Calu3 (cell line): ENCODE measurements at regions of chr1 and their contacts with region 1.

Region 1: DNA sequence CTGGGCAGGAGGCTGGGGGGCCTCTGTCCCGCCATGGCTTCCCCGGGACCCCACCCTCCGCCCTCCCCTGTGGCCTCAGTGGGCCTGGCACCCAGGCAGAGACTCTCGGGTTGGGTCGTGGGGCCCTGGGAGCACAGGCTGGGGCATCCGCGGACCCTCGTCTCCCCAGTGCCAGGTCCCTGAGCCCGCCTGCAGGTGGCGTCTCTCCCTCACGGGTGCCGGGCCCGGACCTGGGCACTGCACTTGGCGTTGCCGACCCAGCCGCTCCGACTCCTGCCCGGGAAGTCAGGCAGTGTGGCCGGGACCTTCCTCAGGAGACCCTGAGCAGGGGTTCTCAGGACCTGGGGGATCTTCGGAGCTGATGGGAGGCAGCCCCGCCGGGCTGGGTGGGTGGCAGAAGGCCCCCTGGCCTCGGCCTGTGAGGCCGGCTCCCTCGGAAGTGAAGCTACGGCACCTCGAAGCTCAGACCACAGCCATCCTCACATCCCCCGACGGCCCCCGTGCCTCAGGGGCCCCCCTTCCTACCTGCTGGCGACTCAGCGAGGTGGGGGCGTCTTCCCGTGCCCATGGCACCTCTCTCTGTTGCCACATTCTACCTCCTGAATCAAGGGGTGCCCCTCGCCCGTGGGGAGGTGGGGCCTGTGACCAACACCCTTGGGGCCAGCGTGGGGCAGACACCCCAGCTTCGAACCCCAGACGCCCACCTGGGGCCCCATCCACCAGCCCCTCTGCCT is 6.4 kb upstream of the C1orf159 start:
- DNase-seq: peak; percentile 88
- H3K4me3 Mint-ChIP-seq: peak overlapping the region; percentile 30
- H3K27ac Mint-ChIP-seq: no peak overlapping the region
- H3K4me1 Mint-ChIP-seq: peaks cover 8% of the 10 kb centered on the region
- H3K27me3 Mint-ChIP-seq: no peaks in the 10 kb centered on the region
- CTCF ChIP-seq: peak; percentile 85

Region 2: DNA sequence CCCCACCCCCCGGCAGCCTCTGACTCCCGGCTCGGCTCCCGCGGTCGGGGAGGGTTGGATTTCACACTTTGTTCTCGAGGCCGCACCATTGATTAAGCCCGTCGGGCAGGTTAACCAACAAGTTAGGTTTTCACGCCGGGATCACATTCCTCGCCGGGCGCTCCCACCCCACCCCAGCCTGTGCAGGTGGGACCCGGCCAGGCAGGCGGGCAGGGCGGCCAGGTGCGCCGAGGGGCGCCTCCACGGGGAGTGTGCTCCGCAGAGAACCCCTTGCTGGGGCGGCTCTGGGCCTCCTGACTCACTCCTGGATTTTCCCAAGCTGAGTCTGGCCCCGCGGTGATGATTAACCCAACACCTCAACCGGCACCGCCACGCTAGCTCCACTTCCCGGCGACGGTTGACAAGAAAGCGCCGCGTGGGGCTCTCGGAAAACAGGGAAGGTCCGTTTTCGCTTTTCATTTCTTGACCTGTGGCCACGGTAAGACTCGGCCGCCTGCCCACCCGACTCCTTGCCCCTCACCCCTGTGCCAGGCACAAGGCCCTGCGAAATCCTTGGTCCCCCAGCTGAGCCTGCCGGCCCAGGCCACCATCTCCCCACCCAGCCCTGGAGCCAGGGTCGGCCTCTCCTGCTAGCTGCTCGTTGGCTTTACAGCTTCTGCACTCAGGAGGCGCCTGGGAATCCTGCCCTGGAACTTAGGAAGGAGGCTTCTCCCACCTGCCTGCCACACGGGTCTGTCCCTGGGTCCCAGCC is 42.6 kb after region 1 on chr1:
- CTCF ChIA-PET with region 1: interaction called, 8 read pairs
- intact Hi-C with region 1: loop called (anchors 2 kb)
- DNase-seq: peak; percentile 66
- H3K4me3 Mint-ChIP-seq: peak overlapping the region; percentile 96
- H3K27ac Mint-ChIP-seq: peak overlapping the region; percentile 92
- H3K4me1 Mint-ChIP-seq: peaks cover 9% of the 10 kb centered on the region
- H3K27me3 Mint-ChIP-seq: no peaks in the 10 kb centered on the region
- CTCF ChIP-seq: no peak

Region 3: GRCh38 chr1:1246577-1247340 is 124.5 kb after region 1 on chr1 and contains the start of gene C1QTNF12:
- CTCF ChIA-PET with region 1: interaction called, 4 read pairs
- intact Hi-C with region 1: loop called (anchors 5 kb)
- DNase-seq: no peak
- H3K4me3 Mint-ChIP-seq: no peak within 1 kb of the TSS
- H3K27ac Mint-ChIP-seq: no peak within 1 kb of the TSS
- H3K4me1 Mint-ChIP-seq: no peaks in the 10 kb centered on the region
- H3K27me3 Mint-ChIP-seq: no peaks in the 10 kb centered on the region
- CTCF ChIP-seq: no peak
- total RNA-seq, gene C1QTNF12: 2.0 and 4.2 TPM in 2 replicates

Region 4: GRCh38 chr1:1291548-1292441 is 169.6 kb after region 1 on chr1:
- CTCF ChIA-PET with region 1: interaction called, 17 read pairs
- intact Hi-C with region 1: no loop called
- DNase-seq: peak; percentile 82
- H3K4me3 Mint-ChIP-seq: no peak overlapping the region
- H3K27ac Mint-ChIP-seq: no peak overlapping the region
- H3K4me1 Mint-ChIP-seq: no peaks in the 10 kb centered on the region
- H3K27me3 Mint-ChIP-seq: no peaks in the 10 kb centered on the region
- CTCF ChIP-seq: no peak